ENCODE measurements at regions of chr19 and their contacts with region 1.

Region 1: GRCh38 chr19:47745010-47745901 is at the start of gene NOP53:
- DNase-seq: peak; percentile 99
- H3K4me3 ChIP-seq: peak within 1 kb of the TSS; percentile 77 to 85 (median 78)
- H3K27ac ChIP-seq: peak within 1 kb of the TSS; percentile 93 to 99 (median 96)
- H3K4me1 ChIP-seq: peaks cover 45 to 73% (median 64%) of the 10 kb centered on the region in 4 donors
- H3K27me3 ChIP-seq: peaks cover 0 to 4% (median 0%) of the 10 kb centered on the region in 4 donors
- CTCF ChIP-seq: peak in 1 of 3 experiments; percentile 21
- EP300 ChIP-seq: peak; percentile 15
- POLR2A ChIP-seq: peak; percentile 68
- total RNA-seq, gene NOP53: 350 to 500 (median 454) TPM

Region 2: DNA sequence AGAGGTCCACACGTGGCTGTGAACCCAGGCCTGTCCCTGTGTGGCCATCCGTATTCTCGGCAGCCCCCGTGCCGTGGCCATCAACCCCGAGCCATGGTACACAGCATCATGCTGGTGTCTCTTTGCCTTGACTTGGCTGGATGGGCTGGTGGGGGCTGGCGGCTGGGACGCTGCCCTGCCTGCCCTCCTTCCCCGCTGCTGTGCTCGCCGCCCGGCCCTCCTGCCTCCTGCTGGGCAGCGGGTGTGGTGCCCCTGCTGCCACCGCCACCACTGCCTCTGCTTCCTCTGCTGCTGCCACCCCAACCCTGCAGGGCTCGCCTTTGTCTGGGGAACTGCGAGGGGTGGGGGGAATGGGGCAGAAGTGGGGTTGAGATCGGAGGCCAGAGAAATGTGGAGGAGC is 51.8 kb before region 1 on chr19:
- intact Hi-C with region 1: no loop called
- DNase-seq: no peak
- H3K4me3 ChIP-seq: no peak overlapping the region
- H3K27ac ChIP-seq: no peak overlapping the region
- H3K4me1 ChIP-seq: peaks cover 6 to 24% (median 9%) of the 10 kb centered on the region in 4 donors
- H3K27me3 ChIP-seq: no peaks in the 10 kb centered on the region
- CTCF ChIP-seq: no peak
- EP300 ChIP-seq: no peak
- POLR2A ChIP-seq: no peak

Region 3: DNA sequence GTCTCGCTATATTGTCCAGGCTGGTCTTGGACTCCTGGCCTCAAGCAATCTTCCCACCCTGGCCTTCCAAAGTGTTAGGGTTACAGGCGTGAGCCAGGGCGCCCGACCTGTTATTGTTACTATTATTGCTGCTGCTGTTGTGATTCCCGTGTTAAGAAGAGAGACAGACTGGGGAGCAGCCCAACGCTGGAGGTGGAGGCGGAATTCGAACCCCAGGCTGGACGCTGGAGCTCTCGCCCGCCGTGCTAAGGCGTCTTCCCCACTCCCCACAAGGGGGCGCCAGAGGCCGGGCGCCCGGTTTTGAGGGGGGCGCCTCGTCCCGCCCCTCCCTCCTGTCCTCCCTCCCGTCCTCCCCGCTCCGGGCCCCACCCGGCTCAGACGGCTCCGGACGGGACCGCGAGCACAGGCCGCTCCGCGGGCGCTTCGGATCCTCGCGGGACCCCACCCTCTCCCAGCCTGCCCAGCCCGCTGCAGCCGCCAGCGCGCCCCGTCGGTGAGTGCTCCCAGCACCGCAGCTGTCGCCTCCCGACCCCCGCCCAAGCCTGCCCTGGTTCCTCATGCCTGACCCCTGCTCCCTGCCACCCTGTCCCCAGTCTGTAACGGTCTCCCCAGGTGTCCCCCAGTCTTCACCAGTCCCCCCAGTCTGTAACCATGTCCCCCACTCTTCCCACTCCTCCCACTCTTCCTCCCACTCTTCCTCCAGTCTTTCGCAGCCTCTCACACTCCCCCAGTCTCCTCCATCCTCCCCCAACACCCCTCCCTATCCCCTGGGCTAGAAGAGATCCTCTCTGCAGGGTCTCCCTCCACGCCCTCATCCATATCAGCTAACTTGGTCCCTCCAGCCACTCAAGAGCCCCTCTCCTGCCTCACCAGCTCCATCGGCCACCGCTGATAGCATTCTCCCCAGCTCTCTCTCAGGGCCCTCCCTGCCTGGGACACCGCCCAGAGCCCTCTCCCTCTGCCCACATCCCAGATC is 31.9 kb before region 1 on chr19 and contains the start of gene EHD2:
- intact Hi-C with region 1: loop called (anchors 1 kb)
- DNase-seq: no peak
- H3K4me3 ChIP-seq: peak within 1 kb of the TSS; percentile 70 to 95 (median 81)
- H3K27ac ChIP-seq: peak within 1 kb of the TSS; percentile 87 to 97 (median 92)
- H3K4me1 ChIP-seq: peaks cover 37 to 53% (median 48%) of the 10 kb centered on the region in 4 donors
- H3K27me3 ChIP-seq: no peaks in the 10 kb centered on the region
- CTCF ChIP-seq: peak; percentile 97 to 99 (median 99)
- EP300 ChIP-seq: no peak
- POLR2A ChIP-seq: peak; percentile 90
- total RNA-seq, gene EHD2: 154 to 444 (median 250) TPM